Cardiac septum (tissue), 1 donor: ENCODE measurements at regions of chr7 and their contacts with region 1.

Region 1: DNA sequence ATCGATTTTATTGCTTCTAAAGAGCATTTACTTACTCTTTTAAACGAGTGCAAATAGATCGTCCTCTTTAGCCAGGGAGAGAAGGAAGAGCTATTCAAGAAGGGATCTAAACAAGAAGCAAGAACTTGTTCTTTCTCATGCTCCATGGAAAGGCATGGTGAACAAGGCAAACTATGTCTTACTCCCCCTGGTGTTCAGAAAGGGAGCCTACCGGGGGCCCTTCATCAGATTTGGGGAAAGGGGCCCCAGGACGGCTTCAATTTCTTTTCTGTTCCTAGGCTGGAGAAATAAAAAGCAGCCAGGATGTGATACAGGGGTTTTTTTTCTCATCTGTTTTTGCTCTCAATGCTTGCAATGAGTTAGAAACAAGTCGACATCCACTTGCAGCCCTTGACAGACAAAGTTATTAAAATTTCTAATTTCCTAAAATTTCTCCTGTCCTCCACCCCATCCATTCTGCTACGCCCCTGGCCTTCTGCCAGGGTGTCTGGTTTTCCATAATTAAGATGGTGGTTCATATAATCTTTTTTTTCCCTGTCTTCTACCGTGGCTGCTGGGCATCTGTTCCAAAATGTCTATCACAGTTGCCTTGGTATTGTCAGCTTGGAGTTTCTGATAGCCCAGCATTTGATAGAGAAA is 214.4 kb downstream of the CREB5 start:
- DNase-seq: no peak

Region 2: DNA sequence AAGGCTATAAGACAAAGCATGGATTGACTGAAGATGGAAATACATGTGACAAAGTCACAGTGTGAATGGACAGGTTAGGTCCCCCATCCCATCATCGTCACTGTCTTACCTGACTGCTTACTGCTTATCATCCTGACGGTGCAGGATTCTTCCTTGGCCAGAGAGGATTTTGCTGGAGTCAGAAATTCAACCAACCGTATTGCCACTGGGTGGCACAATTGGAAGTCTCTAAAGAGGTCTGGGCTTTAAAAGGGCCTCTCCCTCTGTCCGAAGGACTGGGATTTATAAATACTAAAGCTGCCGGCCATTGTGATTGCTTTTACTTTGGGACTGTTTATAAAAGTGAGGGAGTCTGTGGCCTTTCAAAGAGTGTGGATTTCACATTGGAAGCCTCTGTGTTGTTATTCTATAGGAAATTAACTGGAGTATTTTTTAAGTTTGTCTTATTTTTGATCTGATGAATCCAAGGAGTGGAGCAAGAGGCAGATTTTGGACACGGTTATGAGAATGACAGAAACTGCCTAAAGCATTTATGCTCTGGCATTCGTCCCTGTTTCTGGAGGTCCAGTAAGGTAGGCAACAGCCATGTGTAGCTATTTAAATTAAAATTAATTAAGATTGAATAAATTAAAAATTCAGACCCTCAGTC is 327.7 kb before region 1 on chr7:
- intact Hi-C with region 1: loop called (anchors 10 kb)
- DNase-seq: no peak

Region 3: DNA sequence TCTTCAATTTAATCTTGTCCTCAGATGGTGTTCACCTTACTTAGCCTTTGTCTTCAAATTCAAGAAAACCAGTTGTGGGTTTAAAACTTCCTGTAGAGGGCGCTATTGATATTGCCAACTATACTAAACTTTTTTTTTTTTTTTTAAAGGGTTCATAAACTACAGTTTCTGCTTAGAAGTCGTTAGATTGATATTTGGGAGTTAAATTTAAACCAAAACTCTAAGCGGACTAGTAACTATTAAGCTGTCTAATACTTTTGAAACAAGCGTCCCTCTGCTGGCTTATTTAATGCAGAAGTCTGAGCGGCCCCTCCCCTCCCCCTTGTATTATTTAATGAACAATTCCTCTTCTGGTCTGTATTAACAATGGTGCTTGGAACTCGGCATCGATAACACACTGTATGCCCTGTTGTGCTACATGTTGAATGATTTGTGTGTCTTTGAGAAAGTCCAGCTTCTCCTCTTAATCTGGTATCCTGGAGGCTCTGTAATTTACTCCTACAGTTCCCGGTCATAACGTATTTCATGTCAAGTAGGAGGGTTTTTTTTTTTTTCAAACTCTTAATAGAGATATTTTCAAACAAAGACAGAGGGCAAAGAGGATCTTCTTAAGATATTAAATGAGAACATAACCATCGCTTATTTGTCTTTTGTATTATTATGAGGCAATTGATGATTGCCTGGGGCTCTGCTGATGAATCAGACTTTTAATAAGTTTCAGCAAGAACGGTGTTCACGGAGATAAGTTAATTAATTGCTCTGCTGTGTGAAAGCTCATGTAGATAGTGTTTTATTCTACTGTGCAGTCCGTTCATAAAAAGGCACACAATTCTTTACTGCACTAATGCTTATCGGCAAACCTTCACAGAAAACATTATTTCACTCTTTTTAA is 237.0 kb before region 1 on chr7:
- intact Hi-C with region 1: loop called (anchors 2 kb)
- DNase-seq: no peak

Region 4: DNA sequence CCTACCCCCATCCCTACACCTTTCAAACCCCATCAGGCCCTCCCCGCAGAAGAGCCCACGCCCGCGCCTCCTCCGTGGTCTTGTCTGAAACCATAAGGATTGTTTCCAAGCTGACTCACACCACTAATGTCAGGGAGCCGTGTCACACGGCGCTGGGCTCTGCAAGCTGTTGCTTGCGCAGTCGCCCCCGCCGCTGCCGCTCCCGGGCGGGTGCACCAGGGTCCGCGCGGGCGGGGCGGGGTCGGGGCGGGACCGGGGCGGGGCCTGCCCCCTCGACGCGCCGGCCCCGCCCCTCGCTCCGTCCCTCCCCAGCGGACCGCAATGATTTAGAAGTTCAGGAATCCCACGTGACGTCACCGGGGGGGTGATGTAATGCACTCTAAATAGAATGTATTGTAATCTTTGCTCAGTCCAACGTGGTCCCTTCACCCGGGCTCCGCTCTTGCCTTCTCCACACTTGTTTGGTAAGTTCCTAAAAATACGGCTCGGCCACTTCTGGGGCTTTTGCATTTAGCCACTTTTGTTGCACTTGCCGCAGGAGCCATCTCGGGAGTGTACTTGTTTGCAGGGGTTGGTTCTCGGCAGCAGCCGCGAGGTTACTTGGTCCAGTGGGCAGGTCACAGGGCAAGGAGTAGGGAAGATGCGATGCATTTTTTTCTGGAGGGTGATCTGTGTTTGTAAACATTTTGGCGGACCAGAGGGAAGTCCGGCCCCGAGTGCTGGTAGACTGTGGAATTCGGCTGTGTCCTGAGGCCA is 217.6 kb before region 1 on chr7:
- intact Hi-C with region 1: loop called (anchors 5 kb)
- DNase-seq: peak; percentile 96

Region 5: DNA sequence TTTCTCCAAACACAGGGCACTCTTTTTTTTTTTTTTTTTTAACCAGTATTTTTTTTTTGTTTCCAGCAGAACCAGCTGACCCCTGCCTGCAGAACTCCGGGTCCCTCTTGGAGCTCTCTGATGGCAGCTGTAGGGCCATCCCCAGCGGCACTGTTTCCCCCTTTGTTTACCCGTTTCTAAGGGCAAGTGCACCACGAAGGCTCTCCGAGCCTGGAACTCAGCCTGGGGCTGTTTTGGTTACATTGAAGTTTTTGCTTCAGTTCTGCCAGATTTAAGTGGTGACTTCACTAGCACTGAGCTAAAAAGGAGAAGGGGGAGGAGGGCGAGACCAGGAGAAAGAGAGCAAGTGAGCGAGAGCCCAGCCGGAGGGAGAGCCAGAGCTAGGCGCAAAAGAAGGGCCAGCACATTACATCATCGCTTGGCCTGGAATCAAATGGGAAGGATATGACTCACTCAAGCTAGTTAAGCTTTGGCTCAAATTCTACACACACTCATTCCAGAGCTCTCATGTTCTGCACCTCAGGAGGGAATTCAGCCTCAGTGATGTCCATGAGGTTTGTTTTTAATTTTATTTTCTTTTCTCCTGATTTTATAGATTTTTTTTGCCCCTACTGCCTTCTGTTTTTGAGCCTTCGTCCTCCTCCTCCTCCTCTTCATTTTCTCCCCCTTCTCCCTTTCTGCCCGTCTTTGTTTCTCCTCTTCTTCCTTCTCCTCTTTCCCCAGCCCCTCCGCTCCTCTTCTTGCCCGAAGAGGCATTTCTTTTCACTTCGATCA is 59.1 kb after region 1 on chr7:
- intact Hi-C with region 1: loop called (anchors 5 kb)
- DNase-seq: peak; percentile 95

Region 6: GRCh38 chr7:28698840-28699239 is 72.1 kb after region 1 on chr7:
- intact Hi-C with region 1: no loop called
- DNase-seq: no peak

Region 7: GRCh38 chr7:28853834-28854749 is 227.3 kb after region 1 on chr7:
- intact Hi-C with region 1: loop called (anchors 5 kb)
- DNase-seq: peak; percentile 93